Mucosa of descending colon (tissue), 3 donors: ENCODE measurements at regions of chr22 and their contacts with region 1.

Region 1: GRCh38 chr22:41127451-41127850 is 35.1 kb downstream of the EP300 start:
- DNase-seq: peak in 1 of 3 donors; percentile 56
- ATAC-seq: no peak
- H3K4me3 ChIP-seq: no peak overlapping the region
- H3K4me1 ChIP-seq: no peaks in the 10 kb centered on the region
- CTCF ChIP-seq: no peak

Region 2: GRCh38 chr22:40856513-40857308 is 270.7 kb before region 1 on chr22 and contains the starts of genes ST13 and XPNPEP3:
- intact Hi-C with region 1: no loop called
- DNase-seq: peak; percentile 97 to 99 (median 98)
- ATAC-seq: peak; percentile 97
- H3K4me3 ChIP-seq: peak within 1 kb of the TSS; percentile 86
- H3K4me1 ChIP-seq: peaks cover 47% of the 10 kb centered on the region
- CTCF ChIP-seq: no peak
- total RNA-seq, gene ST13: 151 to 278 (median 151) TPM
- total RNA-seq, gene XPNPEP3: 9.8 to 21.7 (median 14.6) TPM

Region 3: GRCh38 chr22:40922484-40923303 is 204.8 kb before region 1 on chr22:
- intact Hi-C with region 1: loop called in 1 of 2 experiments (anchors 10 kb)
- DNase-seq: peak in 1 of 3 donors; percentile 62
- ATAC-seq: peak; percentile 88
- H3K4me3 ChIP-seq: no peak overlapping the region
- H3K4me1 ChIP-seq: peaks cover 4% of the 10 kb centered on the region
- CTCF ChIP-seq: peak; percentile 29

Region 4: GRCh38 chr22:41009202-41009943 is 118.1 kb before region 1 on chr22:
- intact Hi-C with region 1: no loop called
- DNase-seq: peak; percentile 12 to 50 (median 35)
- ATAC-seq: peak; percentile 68
- H3K4me3 ChIP-seq: no peak overlapping the region
- H3K4me1 ChIP-seq: no peaks in the 10 kb centered on the region
- CTCF ChIP-seq: no peak

Region 5: GRCh38 chr22:41197038-41197972 is 69.9 kb after region 1 on chr22:
- intact Hi-C with region 1: no loop called
- DNase-seq: peak; percentile 87 to 90 (median 89)
- ATAC-seq: peak; percentile 94
- H3K4me3 ChIP-seq: peak overlapping the region; percentile 57
- H3K4me1 ChIP-seq: peaks cover 15% of the 10 kb centered on the region
- CTCF ChIP-seq: no peak